Breast epithelium (tissue), 4 donors: ENCODE measurements at regions of chr7 and their contacts with region 1.

Region 1: GRCh38 chr7:142098004-142098403 is 13.5 kb upstream of the MGAM2 start:
- DNase-seq: no peak
- H3K4me3 ChIP-seq: no peak overlapping the region
- H3K27ac ChIP-seq: no peak overlapping the region
- H3K4me1 ChIP-seq: no peaks in the 10 kb centered on the region
- H3K27me3 ChIP-seq: no peaks in the 10 kb centered on the region
- CTCF ChIP-seq: no peak
- POLR2A ChIP-seq: no peak

Region 2: DNA sequence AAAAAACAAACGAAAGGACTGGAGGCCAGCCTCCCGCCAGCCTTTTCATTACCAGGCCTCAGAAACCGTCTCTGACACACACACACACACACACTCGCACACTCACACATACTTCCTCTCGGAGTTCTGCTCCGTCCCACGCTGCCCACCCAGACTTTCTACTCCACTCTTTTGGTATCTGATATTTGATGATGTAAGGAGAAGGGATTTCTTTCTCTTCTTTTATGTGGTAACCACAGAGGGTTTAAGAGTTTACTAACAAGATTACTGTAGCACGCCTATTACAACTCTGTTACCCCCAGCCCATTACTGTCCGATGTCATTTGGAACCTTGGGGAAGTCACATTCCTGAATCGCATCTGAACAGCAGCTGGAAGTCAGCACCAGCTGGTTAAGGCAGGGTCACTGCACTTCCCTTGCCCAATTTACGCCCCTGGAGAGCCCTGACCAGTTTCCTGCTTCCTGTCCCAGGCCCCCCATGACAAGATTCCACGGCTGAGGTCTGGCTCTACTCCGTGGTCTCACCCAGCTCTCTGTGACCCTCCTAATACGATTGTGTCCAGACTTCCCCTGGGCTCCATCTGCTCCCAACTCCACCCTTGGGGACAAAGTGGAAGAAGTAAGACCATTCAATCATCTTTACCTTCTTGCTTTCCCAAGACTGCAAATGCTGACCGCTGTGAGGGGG is 1458.5 kb before region 1 on chr7:
- intact Hi-C with region 1: loop called (anchors 10 kb)
- DNase-seq: no peak
- H3K4me3 ChIP-seq: peak overlapping the region; percentile 60 to 87 (median 70)
- H3K27ac ChIP-seq: peak overlapping the region; percentile 36 to 93
- H3K4me1 ChIP-seq: no peaks in the 10 kb centered on the region
- H3K27me3 ChIP-seq: peaks cover 0 to 10% of the 10 kb centered on the region in 2 donors
- CTCF ChIP-seq: no peak
- POLR2A ChIP-seq: no peak

Region 3: DNA sequence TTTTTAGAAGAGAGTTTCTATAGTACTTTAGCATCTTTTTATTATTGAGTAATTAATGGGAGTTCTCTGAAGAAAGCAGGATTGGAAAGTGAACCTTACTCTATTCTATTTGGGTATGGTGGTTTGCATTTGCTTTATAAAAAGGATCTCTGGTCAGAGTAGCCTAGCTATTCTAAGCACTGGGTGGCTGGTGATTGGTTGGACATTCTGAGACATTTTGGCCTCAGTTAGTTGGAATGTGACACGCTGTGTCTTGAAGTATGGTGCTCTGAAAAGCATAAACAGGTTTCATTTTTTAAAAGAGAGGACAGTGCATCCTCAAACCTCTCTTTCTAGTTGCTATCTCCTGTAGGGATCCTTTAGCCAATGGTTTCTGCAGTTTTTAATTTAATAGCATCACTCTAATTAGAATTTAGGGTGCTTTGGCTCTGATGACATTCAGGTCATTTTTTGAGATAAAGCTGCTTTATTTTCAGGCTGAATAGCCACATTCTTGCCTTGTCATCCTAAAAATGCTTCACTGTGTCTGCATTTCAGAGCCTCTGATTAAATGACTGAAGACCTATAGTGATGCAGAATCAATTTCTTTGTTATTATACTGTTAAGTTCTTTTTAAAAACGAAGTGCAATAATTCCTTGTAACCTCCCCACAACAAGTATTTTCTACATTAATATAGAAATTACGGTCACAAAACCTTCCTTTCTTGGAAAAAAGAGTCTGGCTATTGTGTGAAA is 1003.5 kb before region 1 on chr7:
- intact Hi-C with region 1: no loop called
- DNase-seq: no peak
- H3K4me3 ChIP-seq: no peak overlapping the region
- H3K27ac ChIP-seq: no peak overlapping the region
- H3K4me1 ChIP-seq: no peaks in the 10 kb centered on the region
- H3K27me3 ChIP-seq: no peaks in the 10 kb centered on the region
- CTCF ChIP-seq: no peak
- POLR2A ChIP-seq: no peak